Activated CD4-positive, alpha-beta T cell treated with anti-CD3 and anti-CD28 coated beads, Interleukin-2, amount 10 ng/mL, durations not matched to agents 24 days and 14 days (primary cell): ENCODE measurements at regions of chr21 and their contacts with region 1.

Region 1: DNA sequence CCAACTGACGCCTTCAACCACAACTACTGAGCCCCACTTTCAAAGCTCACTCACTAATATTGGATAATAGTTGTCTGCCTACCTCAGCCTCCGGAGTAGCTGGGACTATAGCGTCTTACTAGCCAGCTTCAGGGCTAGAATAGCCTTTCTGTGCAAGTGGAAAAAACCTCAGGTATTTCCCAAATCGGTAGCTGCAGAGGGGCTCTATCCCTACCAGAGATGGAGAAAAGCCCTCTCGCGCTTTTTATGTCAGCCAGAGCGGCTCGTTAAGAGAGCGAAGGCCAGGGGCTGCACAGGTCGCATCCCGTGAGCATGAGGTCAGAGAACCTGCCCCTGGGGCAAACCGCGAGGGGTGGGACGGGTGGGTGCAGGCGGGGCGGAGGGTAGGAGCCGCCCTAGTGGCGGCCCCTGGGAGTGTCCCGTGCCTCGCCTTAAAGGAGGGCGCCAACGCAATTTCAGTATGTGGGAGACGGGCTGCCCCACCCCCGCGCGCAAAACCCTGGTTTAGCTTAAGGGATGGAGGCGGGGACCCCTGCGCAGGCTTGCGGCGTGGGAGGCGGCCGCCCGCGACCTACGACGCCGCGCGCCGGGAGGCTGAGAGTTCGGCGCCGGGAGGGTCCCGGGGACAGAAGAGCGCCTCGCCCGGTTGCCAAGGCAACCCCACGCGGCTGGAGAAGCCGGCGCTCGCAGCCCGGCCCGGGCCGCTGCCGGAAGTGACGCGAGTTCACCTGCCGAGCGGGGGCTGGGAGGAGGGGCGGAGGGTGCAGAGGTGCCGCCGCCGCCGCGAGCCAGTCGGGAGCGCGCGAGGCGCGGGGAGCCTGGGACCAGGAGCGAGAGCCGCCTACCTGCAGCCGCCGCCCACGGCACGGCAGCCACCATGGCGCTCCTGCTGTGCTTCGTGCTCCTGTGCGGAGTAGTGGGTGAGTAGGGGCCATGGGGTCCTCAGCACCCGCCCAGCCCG is at the start of gene CXADR:
- DNase-seq: peak; percentile 92
- H3K4me3 Mint-ChIP-seq: peak within 1 kb of the TSS; percentile 87
- H3K27ac Mint-ChIP-seq: peak within 1 kb of the TSS; percentile 70
- H3K4me1 Mint-ChIP-seq: peaks cover 15% of the 10 kb centered on the region
- H3K27me3 Mint-ChIP-seq: peaks cover 53% of the 10 kb centered on the region
- total RNA-seq, gene CXADR: 0.16 and 0.33 TPM in 2 replicates

Region 2: GRCh38 chr21:17461014-17461413 is 51.5 kb before region 1 on chr21:
- intact Hi-C with region 1: loop called (anchors 10 kb)
- DNase-seq: no peak
- H3K4me3 Mint-ChIP-seq: no peak overlapping the region
- H3K27ac Mint-ChIP-seq: no peak overlapping the region
- H3K4me1 Mint-ChIP-seq: no peaks in the 10 kb centered on the region
- H3K27me3 Mint-ChIP-seq: no peaks in the 10 kb centered on the region

Region 3: GRCh38 chr21:17491716-17492414 is 20.7 kb before region 1 on chr21:
- intact Hi-C with region 1: loop called (anchors 2 kb)
- DNase-seq: no peak
- H3K4me3 Mint-ChIP-seq: peak overlapping the region; percentile 2
- H3K27ac Mint-ChIP-seq: no peak overlapping the region
- H3K4me1 Mint-ChIP-seq: peaks cover 18% of the 10 kb centered on the region
- H3K27me3 Mint-ChIP-seq: peaks cover 13% of the 10 kb centered on the region

Region 4: GRCh38 chr21:17590430-17590829 is 77.9 kb after region 1 on chr21:
- intact Hi-C with region 1: loop called (anchors 5 kb)
- DNase-seq: no peak
- H3K4me3 Mint-ChIP-seq: no peak overlapping the region
- H3K27ac Mint-ChIP-seq: no peak overlapping the region
- H3K4me1 Mint-ChIP-seq: peaks cover 4% of the 10 kb centered on the region
- H3K27me3 Mint-ChIP-seq: no peaks in the 10 kb centered on the region

Region 5: GRCh38 chr21:17611414-17612022 is 99.0 kb after region 1 on chr21:
- intact Hi-C with region 1: loop called (anchors 2 kb)
- DNase-seq: peak; percentile 94
- H3K4me3 Mint-ChIP-seq: peak overlapping the region; percentile 84
- H3K27ac Mint-ChIP-seq: peak overlapping the region; percentile 96
- H3K4me1 Mint-ChIP-seq: peaks cover 46% of the 10 kb centered on the region
- H3K27me3 Mint-ChIP-seq: no peaks in the 10 kb centered on the region

Region 6: GRCh38 chr21:17798796-17799195 is 286.3 kb after region 1 on chr21:
- intact Hi-C with region 1: no loop called
- DNase-seq: peak; percentile 34
- H3K4me3 Mint-ChIP-seq: no peak overlapping the region
- H3K27ac Mint-ChIP-seq: no peak overlapping the region
- H3K4me1 Mint-ChIP-seq: peaks cover 39% of the 10 kb centered on the region
- H3K27me3 Mint-ChIP-seq: no peaks in the 10 kb centered on the region